Common myeloid progenitor, CD34-positive (primary cell): ENCODE measurements at regions of chr4 and their contacts with region 1.

Region 1: DNA sequence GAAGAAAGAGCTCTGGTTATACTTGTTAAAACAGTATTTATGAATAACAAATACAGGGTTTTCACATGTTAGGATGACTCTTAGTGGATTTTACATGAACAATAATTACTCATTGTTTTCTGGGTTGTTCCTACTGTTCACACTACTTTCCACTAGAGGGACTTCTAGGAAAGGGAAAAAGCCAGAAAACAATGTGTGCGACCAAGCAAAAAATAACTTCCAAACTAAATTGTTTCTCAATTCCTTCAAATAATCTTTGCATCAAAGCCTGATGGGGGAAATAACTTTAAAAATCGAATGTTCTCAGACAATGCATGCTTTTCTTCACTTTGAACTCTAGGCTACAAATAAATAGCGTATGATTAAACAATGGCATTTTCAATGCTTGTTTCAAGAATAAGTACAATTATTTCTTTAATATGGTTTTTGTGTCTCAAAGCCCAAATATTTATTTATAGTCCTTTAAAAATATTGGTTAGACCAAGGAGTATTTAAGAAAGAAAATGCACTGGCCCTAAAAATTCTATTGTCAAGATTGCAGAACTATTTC is 72.1 kb upstream of the ETNPPL start:
- DNase-seq: peak; percentile 29 to 64 (median 58)
- H3K4me3 ChIP-seq: no peak overlapping the region
- H3K27ac ChIP-seq: no peak overlapping the region
- H3K4me1 ChIP-seq: no peaks in the 10 kb centered on the region
- H3K27me3 ChIP-seq: peaks cover 0 to 33% (median 13%) of the 10 kb centered on the region in 5 experiments

Region 2: DNA sequence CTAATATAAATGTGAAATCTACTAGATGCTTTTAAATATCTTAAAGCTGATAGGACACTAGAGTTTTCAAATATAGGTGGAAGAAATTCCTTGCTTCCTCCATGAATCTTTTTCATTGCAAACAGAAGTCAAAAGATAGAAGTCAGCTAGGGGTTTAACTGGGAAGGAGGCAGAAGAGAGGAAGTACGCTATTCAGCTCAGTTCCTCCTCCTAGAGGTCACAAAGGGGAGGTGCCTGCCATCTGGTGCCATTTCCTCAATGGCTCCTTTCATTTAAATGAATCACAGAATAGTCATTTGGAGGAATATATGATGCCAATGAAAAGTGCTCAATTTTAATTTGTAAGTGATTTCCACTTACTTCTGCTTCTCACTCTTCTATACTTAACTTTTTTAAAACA is 459.1 kb after region 1 on chr4:
- CTCF ChIA-PET with region 1: interaction called, 20 read pairs
- POLR2A ChIA-PET with region 1: no interaction called
- DNase-seq: peak; percentile 53 to 80 (median 80)
- H3K4me3 ChIP-seq: no peak overlapping the region
- H3K27ac ChIP-seq: no peak overlapping the region
- H3K4me1 ChIP-seq: no peaks in the 10 kb centered on the region
- H3K27me3 ChIP-seq: peaks cover 0 to 28% (median 6%) of the 10 kb centered on the region in 5 experiments

Region 3: DNA sequence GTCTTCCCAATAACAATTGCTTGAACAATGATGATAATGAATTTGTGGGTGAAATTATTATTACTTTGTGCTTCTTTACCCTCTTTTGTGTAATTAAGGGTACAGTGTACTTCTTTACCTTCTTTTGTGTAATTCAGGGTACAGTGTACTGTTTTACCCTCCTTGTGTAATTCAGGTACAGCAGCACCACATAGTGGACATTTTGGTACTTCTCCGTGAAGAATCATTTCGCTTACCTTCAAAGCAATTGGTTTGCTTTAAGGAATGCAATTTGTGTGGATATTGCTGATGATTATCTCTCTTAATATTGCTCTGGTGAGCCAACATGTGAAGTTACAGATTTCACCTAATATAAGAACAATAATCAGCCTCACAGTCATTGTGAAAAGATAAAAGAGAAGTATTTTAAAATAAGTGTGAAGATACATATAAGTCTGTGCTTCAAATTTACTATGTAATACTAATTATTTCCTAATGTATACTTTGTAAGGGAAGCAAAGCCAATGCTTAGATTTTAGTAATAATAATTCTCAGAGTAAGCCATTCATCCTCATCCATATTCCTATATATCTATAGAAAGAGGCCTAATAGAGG is 571.5 kb after region 1 on chr4:
- CTCF ChIA-PET with region 1: interaction called, 10 read pairs
- POLR2A ChIA-PET with region 1: no interaction called
- DNase-seq: peak; percentile 71 to 85 (median 81)
- H3K4me3 ChIP-seq: no peak overlapping the region
- H3K27ac ChIP-seq: no peak overlapping the region
- H3K4me1 ChIP-seq: no peaks in the 10 kb centered on the region
- H3K27me3 ChIP-seq: peaks cover 0 to 16% (median 3%) of the 10 kb centered on the region in 5 experiments